CD4-positive, alpha-beta memory T cell (primary cell): ENCODE measurements at regions of chr15 and their contacts with region 1.

Region 1: DNA sequence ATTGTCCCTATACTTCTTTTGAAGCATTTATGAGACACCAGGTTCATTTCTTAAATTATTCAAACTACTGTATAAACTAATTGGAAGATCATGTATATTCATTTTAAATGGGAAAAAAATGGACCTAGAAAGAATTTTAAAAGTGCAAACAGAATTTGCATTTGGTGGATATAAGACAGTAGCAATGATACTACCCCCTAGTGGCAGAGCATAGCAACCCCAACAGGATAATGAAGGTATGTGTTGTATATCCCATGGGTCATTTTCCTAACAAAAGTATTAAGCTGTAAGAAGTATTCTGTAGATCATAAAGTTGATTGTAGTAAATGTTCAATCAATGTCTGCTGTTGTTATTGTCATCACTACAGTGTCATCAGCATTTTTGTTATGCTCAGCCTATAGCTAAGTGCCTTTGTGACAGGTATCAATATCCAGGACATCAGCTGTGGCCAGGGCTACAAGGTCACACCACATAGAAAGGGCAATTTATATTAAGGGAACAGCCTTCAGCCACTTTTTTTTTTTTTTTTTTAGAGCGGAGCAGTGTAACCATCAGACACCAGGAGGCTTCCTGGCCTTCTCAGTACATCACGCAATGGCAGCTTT is 175.8 kb downstream of the FOXB1 start:
- DNase-seq: peak; percentile 35 to 51 (median 45)
- H3K4me3 ChIP-seq: no peak overlapping the region
- H3K4me3 Mint-ChIP-seq: no peak overlapping the region
- H3K27ac ChIP-seq: no peak overlapping the region
- H3K27ac Mint-ChIP-seq: no peak overlapping the region
- H3K4me1 ChIP-seq: no peaks in the 10 kb centered on the region
- H3K4me1 Mint-ChIP-seq: no peaks in the 10 kb centered on the region
- H3K27me3 ChIP-seq: no peaks in the 10 kb centered on the region
- H3K27me3 Mint-ChIP-seq: peaks cover 8 to 18% of the 10 kb centered on the region in 2 donors

Region 2: DNA sequence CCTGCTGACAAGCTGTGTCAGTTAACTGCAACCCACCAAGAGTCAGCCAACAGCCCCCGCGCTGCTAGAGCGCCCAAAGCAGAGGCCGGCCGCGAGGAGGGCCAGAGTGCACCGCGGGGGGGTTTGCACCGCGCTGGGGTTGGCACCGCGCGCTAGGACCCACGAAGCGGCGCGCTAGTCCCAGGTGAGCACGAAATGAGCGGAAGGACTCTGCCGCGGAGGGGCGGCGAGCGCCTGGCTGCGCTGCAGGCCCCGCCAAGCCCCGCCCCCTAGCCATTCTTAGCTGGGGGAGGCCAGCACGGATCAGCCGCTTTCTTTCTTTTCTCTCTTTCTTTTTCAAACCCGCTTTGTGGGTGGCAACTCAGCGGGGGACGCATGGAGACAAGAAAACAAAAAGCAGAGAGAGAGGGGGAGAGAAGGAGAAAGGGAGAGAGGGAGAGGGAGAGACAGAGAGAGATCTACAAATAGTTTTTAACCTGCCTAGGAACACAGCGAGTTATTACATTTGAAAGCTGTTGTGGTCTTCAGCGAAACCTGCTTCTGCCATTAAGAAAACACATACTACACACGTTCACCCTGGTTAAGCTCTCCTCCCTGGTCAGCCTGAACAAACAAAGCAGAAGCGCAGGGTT is 182.7 kb before region 1 on chr15:
- CTCF ChIA-PET with region 1: interaction called, 4 read pairs
- POLR2A ChIA-PET with region 1: no interaction called
- intact Hi-C with region 1: loop called (anchors 10 kb)
- DNase-seq: peak in 3 of 5 donors; percentile 42 to 49 (median 43)
- H3K4me3 ChIP-seq: no peak overlapping the region
- H3K4me3 Mint-ChIP-seq: peak overlapping the region in 6 of 8 donors; percentile 13 to 68 (median 60)
- H3K27ac ChIP-seq: no peak overlapping the region
- H3K27ac Mint-ChIP-seq: peak overlapping the region in 2 of 7 donors; percentile 90 to 96
- H3K4me1 ChIP-seq: peaks cover 40% of the 10 kb centered on the region
- H3K4me1 Mint-ChIP-seq: peaks cover 21 to 67% (median 35%) of the 10 kb centered on the region in 4 donors
- H3K27me3 ChIP-seq: peaks cover 97% of the 10 kb centered on the region
- H3K27me3 Mint-ChIP-seq: peaks cover 76 to 84% of the 10 kb centered on the region in 2 donors